Head of caudate nucleus (tissue), 42 donors: ENCODE measurements at regions of chr20 and their contacts with region 1.

Region 1: GRCh38 chr20:2451939-2452732 is 18.5 kb downstream of the SNRPB start:
- DNase-seq: peak; percentile 57 to 91 (median 79)

Region 2: DNA sequence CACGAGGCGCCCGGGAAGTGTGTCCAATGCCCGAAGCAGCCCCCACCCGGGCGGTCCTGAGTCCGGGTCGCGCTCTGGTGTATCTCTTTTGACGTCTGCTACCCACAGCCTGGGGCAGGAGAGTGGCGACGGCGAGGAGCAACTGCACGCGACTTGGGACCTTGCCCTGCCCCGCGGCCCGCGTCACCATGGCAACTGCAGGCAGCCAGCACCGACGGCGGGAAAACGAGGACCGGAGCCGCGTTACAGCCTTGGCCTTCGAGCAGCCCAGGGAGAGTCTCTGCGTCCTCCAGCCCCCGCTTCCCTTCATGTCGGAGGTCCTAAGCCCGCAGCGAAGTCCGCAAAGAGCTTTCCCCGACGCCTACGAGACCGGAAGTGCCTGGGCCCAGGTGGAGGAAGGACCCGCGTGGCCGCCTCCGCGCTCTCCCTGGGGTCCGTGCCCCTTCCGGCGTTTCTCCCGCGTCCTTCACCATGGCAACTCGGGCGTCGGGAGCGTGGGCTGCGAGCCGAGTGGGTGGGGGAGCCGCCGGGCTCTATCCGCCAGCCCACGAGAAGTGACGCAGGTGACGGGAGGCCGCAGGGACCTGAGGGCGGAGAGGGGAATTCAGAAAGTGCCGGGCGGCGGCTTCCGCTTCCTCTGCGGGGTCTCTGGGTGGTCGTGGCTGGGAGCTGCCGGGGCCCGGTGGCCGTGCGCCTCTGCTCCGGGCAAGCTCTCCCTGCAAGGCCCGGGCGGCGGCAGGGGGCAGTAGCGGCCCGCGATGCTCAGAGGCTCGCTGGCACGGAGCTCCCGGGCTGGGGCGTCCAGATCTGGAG is 245.0 kb before region 1 on chr20:
- intact Hi-C with region 1: loop called (anchors 5 kb)
- DNase-seq: peak; percentile 10 to 84 (median 68)